ENCODE measurements at regions of chr3 and their contacts with region 1.

Region 1: GRCh38 chr3:13452490-13453335 is 27.4 kb upstream of the HDAC11 start:
- DNase-seq: peak; percentile 60
- H3K4me3 Mint-ChIP-seq: peak overlapping the region; percentile 86
- H3K27ac Mint-ChIP-seq: peak overlapping the region; percentile 91
- H3K4me1 Mint-ChIP-seq: peaks cover 33% of the 10 kb centered on the region
- H3K27me3 Mint-ChIP-seq: peaks cover 7% of the 10 kb centered on the region

Region 2: GRCh38 chr3:13091898-13092611 is 360.7 kb before region 1 on chr3:
- CTCF ChIA-PET with region 1: interaction called, 27 read pairs
- DNase-seq: peak; percentile 89
- H3K4me3 Mint-ChIP-seq: no peak overlapping the region
- H3K27ac Mint-ChIP-seq: no peak overlapping the region
- H3K4me1 Mint-ChIP-seq: peaks cover 6% of the 10 kb centered on the region
- H3K27me3 Mint-ChIP-seq: peaks cover 49% of the 10 kb centered on the region

Region 3: GRCh38 chr3:13308380-13308801 is 144.3 kb before region 1 on chr3:
- CTCF ChIA-PET with region 1: interaction called, 13 read pairs
- DNase-seq: peak; percentile 48
- H3K4me3 Mint-ChIP-seq: no peak overlapping the region
- H3K27ac Mint-ChIP-seq: no peak overlapping the region
- H3K4me1 Mint-ChIP-seq: no peaks in the 10 kb centered on the region
- H3K27me3 Mint-ChIP-seq: peaks cover 9% of the 10 kb centered on the region

Region 4: DNA sequence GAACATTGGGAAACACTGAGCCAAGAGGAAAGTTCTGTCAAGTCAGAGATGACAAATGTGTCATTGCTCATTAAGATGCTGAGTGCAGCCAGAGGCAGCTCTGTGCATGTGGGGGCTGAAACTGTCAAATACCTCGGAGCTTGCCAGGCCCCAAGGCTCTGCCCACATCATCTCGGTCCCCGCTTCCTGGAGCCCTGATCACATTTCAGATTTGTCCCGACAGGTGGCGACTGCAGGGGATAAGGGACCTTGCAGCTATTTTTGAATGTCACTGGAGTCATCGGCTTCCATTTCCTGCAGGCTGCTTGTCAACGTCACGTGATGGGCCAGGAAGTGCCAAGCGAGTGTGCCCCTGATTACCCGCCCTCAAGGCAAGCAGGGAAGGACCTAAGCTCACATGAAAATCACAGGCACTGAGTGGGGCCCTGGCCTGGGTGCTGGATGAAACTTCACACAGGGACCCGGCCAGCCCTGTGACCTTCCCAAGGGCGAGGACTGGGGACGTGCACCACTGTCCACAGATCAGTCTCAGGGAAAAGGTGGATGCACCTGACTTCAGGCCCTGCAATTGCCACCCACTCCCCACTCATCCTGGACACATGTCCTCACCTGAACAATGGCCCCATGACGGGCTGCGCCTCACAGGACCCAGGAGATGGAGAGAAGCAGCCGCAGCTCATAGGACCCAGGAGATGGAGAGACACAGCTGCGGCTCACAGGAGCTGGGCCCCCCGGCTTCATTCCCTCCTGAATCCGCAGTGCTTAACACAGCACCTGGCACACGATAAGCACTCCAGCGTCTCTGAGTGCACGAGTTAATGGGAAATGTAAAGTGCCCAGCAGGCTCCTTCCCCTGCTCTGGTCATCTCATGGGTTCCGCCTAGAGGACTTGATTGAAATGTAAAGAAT is 106.0 kb before region 1 on chr3:
- CTCF ChIA-PET with region 1: interaction called, 105 read pairs
- DNase-seq: peak; percentile 88
- H3K4me3 Mint-ChIP-seq: no peak overlapping the region
- H3K27ac Mint-ChIP-seq: peak overlapping the region; percentile 93
- H3K4me1 Mint-ChIP-seq: peaks cover 66% of the 10 kb centered on the region
- H3K27me3 Mint-ChIP-seq: no peaks in the 10 kb centered on the region

Region 5: DNA sequence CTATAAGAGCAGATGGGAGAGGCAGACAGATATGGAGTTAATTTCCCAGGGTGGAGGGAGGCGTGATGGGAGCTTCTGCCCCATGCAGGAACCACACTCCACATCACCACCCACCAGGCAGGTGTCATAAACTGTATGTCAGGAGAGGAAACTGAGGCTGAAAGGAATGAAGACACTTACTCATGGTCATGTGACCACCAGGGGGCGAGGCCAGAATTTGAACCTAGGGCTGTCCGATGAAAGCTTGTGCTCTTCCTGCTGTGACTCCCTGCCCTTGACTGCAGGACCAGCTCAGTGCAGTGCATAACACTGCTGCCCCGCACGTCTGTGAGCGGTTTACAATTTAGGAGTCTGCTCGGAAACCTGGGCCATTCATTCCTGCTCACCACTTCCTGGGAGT is 61.4 kb before region 1 on chr3:
- CTCF ChIA-PET with region 1: interaction called, 36 read pairs
- DNase-seq: peak; percentile 43
- H3K4me3 Mint-ChIP-seq: no peak overlapping the region
- H3K27ac Mint-ChIP-seq: peak overlapping the region; percentile 49
- H3K4me1 Mint-ChIP-seq: peaks cover 17% of the 10 kb centered on the region
- H3K27me3 Mint-ChIP-seq: no peaks in the 10 kb centered on the region

Region 6: GRCh38 chr3:13419505-13420044 is 33.1 kb before region 1 on chr3:
- CTCF ChIA-PET with region 1: interaction called, 48 read pairs
- DNase-seq: peak; percentile 69
- H3K4me3 Mint-ChIP-seq: peak overlapping the region; percentile 89
- H3K27ac Mint-ChIP-seq: peak overlapping the region; percentile 87
- H3K4me1 Mint-ChIP-seq: peaks cover 77% of the 10 kb centered on the region
- H3K27me3 Mint-ChIP-seq: no peaks in the 10 kb centered on the region

Measured in activated naive CD4-positive, alpha-beta T cell treated with anti-CD3 and anti-CD28 coated beads, Interleukin-2, amount 10 ng/mL, durations not matched to agents 7 days and 5 days (primary cell).